Common myeloid progenitor, CD34-positive (primary cell): ENCODE measurements at regions of chr4 and their contacts with region 1.

Region 1: DNA sequence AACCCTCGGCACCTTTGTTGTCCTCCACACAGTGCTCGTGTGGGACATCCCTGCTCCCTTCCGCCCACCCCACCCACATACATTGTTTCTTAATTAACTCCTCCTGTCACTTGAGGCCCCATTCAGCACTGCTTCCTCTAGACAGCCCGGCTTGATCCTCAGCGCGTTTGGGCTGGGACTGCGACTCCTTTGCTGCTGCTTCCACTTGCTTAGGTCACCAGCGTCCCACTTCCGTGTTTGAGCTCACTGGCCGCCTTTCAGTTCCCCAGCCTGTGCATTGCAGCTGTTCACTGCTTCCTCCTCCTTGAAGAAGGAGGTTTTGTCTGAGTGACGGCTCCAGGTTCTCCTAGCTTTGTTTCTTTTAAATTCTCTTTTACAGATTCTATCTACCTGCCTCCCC is 16.1 kb downstream of the RNF4 start:
- DNase-seq: peak; percentile 82 to 96 (median 92)
- H3K4me3 ChIP-seq: peak overlapping the region in 5 of 7 experiments; percentile 2 to 62 (median 35)
- H3K27ac ChIP-seq: peak overlapping the region in 1 of 2 experiments; percentile 65
- H3K4me1 ChIP-seq: peaks cover 22 to 53% (median 42%) of the 10 kb centered on the region in 4 experiments
- H3K27me3 ChIP-seq: no peaks in the 10 kb centered on the region

Region 2: DNA sequence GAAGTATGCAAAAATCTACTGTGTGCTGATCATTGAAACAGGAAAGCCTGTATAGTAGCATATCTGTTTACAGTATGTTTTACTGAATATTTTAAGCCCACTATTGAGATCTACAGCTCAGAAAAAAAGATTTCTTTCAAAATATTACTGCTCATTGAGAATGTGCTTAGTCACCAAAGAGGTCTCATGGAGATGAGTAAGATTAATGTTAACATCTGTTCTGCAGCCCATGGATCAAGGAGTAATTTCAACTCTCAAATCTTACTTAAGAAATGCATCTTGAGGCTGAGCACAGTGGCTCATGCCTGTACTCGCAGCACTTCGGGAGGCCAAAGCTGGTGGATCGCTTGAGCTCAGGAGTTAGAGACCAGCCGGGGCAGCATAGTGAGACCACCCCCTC is 12.8 kb before region 1 on chr4:
- CTCF ChIA-PET with region 1: interaction called, 26 read pairs
- POLR2A ChIA-PET with region 1: interaction called, 7 read pairs
- DNase-seq: peak in 1 of 3 donors; percentile 29
- H3K4me3 ChIP-seq: no peak overlapping the region
- H3K27ac ChIP-seq: no peak overlapping the region
- H3K4me1 ChIP-seq: peaks cover 11 to 26% (median 24%) of the 10 kb centered on the region in 4 experiments
- H3K27me3 ChIP-seq: no peaks in the 10 kb centered on the region

Region 3: DNA sequence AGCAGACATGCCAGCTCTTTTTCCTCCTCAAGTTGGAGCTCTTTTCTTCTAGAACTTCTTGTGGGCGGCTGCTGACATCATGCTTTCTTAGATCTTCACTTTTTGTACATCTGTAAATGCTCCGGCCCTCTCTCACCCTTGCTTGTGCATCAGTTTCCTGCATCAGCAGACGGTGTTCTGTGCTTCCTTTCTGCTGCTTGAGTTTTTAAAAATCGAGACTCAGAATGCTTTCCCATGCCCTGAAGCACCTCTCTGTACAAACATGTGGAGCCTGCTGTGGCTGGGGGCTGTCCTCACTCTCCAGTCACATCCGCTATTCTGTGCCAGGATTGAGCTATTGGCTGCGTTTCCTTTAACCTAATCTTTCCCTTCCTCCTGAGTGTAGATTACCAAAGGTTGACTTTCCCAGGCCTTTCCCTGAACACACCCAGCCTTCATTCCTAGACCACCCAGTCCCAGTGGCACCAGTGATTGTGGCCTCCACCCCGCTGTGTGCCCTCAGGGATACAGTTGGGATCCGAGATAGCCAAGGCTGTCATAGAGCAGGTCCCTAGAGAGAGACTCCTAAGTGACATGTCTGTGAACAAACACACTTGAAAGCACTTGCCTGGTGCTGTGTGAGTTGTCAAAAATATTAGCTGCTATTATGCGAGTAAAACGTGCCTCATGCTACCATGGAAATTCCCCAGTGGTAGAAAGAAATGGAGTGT is 229.2 kb after region 1 on chr4:
- CTCF ChIA-PET with region 1: no interaction called
- POLR2A ChIA-PET with region 1: no interaction called
- DNase-seq: peak; percentile 57 to 83 (median 76)
- H3K4me3 ChIP-seq: peak overlapping the region in 3 of 7 experiments; percentile 5 to 50 (median 34)
- H3K27ac ChIP-seq: peak overlapping the region; percentile 52 to 53
- H3K4me1 ChIP-seq: peaks cover 0 to 31% (median 15%) of the 10 kb centered on the region in 4 experiments
- H3K27me3 ChIP-seq: no peaks in the 10 kb centered on the region